ENCODE measurements at regions of chr9 and their contacts with region 1.

Region 1: DNA sequence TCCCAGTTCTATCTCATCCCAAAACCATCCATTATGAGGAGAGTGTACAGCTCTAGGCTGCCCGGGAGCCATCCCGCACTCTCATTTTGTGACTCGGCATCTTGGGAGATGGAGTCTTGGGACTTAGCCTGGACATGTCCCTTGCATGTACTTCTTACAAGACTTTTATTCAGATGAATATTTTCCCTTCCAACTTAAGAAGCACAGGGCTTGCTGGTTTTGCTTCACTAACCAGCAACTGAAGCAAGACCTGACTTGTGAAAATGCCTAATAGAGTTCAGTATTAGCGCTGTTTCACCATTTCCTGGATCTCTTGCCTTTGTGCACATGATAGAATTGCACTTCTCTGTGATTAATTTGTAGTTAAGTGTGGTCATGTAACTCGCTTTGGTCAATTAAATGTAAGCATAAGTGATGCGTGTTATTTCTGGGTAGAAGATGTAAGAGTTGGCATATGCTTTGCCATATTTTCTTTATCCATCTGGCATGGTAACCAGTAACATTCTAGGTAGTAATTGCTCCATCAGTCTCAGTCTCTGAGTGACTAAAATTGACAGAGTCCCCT is 55.8 kb downstream of the PDCD1LG2 start:
- DNase-seq: no peak
- H3K4me3 ChIP-seq: no peak overlapping the region
- H3K27ac ChIP-seq: no peak overlapping the region
- H3K4me1 ChIP-seq: no peaks in the 10 kb centered on the region
- H3K27me3 ChIP-seq: no peaks in the 10 kb centered on the region
- CTCF ChIP-seq: no peak
- EP300 ChIP-seq: no peak
- POLR2A ChIP-seq: no peak

Region 2: GRCh38 chr9:5510360-5510931 is 55.7 kb before region 1 on chr9 and contains the start of gene PDCD1LG2:
- intact Hi-C with region 1: loop called in 1 of 4 experiments (anchors 10 kb)
- DNase-seq: no peak
- H3K4me3 ChIP-seq: peak within 1 kb of the TSS; percentile 13
- H3K27ac ChIP-seq: peak within 1 kb of the TSS; percentile 9 to 52
- H3K4me1 ChIP-seq: peaks cover 2% of the 10 kb centered on the region
- H3K27me3 ChIP-seq: no peaks in the 10 kb centered on the region
- CTCF ChIP-seq: no peak
- EP300 ChIP-seq: no peak
- POLR2A ChIP-seq: no peak
- total RNA-seq, gene PDCD1LG2: 0.51 to 2.0 (median 1.2) TPM